ENCODE measurements at regions of chr22 and their contacts with region 1.

Region 1: DNA sequence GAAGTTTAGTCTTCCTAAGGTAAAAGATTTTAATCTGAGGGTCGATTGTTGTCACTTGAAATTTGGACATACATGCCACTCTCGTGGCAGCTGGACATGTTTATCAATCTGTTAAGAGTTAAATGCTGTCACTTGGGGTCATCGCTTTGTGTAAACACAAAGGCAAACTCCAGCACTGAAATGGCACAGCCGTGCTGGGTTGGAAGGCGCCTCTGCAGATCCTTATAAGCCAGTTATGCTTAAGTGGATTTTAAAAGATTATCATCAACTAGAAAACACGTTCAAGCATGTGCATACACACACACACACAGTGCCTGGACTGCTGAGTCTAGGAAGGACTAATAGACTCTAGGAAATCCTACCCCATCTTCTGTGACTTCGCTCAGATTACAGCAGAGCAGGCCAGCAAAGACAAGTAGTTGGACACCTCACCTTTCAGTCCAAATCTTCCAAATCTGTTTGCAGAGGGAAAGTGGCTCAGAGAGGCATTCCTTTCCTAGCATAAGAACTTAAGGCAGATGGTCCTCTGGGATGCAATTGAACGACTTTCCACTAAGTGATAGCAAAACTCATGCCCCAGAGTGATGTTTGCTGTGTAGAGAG is 83.7 kb downstream of the CACNG2 start:
- DNase-seq: no peak
- H3K4me3 ChIP-seq: no peak overlapping the region
- H3K27ac ChIP-seq: no peak overlapping the region
- H3K4me1 ChIP-seq: no peaks in the 10 kb centered on the region
- H3K27me3 ChIP-seq: no peaks in the 10 kb centered on the region
- CTCF ChIP-seq: no peak
- EP300 ChIP-seq: no peak
- POLR2A ChIP-seq: no peak

Region 2: DNA sequence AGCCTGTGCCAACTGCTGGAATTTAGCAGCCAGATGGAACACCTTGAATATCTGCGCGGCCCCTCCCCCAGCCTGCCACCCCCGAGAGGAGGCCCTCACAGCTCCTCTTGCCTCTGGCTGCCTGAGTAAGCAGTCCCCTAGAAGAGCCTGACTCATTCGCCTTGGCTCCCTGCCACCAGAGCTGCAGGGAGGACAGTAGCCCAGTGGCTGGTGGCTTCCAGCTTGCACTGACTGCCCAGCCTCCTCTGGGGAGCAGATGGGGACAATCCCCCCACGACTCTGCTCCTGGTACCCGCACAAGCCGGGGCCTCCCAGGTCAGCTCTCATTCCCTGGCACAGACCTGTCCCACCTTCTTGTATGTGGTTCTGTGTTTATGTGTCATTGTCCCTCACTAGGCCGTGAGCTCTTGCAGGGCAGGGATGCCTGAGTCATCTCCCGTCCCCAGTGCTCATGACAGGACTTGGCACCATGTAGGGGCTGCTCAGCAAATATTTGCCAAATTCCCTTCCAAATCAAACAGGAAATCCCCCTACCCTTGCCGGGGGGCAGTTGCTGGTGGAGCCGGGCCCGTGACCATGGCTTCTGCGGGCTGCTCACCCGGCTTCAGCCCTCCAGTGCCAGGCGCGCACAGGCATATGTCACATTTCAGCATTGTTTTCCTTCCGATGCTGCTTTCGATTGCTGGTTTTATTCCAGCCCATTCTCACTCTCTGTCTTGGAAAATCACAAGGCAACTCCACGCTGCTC is 40.0 kb after region 1 on chr22:
- intact Hi-C with region 1: loop called in 1 of 4 experiments (anchors 2 kb)
- DNase-seq: peak; percentile 33 to 70 (median 50)
- H3K4me3 ChIP-seq: no peak overlapping the region
- H3K27ac ChIP-seq: no peak overlapping the region
- H3K4me1 ChIP-seq: no peaks in the 10 kb centered on the region
- H3K27me3 ChIP-seq: no peaks in the 10 kb centered on the region
- CTCF ChIP-seq: no peak
- EP300 ChIP-seq: no peak
- POLR2A ChIP-seq: no peak